ENCODE measurements at regions of chr2 and their contacts with region 1.

Region 1: DNA sequence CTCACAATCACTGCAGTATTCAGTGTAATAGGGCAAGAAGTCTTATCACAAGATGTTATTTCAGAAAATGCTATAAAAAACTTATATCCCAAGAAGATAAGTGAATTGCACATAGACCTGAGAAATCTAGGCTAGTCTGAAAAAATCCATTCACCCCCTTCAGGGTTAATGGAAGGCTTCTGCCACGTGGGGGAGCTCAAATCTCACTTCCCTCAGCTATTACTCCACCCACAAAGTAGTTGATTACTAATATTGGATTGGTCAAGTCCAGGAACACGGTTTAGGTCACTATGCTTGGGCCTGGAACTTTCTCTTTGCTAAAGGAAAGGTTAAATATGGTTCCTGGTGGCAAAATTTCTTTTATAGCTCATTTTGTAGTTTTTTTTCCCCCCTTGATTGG is 51.2 kb upstream of the ADAM23 start:
- DNase-seq: peak; percentile 81
- H3K4me3 ChIP-seq: no peak overlapping the region
- H3K27ac ChIP-seq: no peak overlapping the region
- H3K4me1 ChIP-seq: no peaks in the 10 kb centered on the region
- H3K27me3 ChIP-seq: no peaks in the 10 kb centered on the region
- CTCF ChIP-seq: peak; percentile 67 to 72
- POLR2A ChIP-seq: no peak

Region 2: DNA sequence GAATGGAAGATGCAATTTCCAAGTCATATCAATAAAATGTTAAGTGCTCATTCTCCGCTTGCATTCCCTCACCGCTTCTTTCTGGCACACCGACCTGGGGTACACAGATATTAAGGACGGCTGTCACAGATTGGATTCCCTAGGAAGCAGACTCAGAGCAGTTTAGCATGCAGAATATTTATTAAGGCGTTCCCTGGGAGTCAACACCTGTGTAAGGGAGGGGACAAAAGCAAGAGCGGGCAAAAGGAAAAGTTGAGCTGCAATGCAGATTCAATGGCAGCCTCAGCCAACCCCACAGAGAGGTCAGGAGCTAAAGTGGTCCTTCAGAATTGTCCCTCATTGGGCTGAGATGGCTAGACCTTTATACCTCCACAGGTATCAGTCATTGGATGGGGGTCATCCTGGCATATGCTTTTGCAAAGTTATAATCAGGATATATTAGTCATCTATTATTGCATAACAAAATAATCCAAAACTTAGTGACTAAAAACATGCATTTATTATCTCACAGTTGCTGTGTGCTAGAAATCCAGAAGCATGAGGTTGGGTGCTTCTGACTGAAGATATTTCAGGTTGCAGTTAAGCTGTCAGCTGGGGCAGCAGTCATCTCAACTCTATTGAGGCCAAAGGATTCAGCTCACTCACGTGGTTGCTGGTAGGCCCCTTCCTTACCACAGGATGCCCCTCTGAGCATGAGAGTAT is 279.1 kb before region 1 on chr2:
- CTCF ChIA-PET with region 1: no interaction called
- POLR2A ChIA-PET with region 1: no interaction called
- dilution Hi-C with region 1: no loop called
- intact Hi-C with region 1: no loop called
- DNase-seq: no peak
- H3K4me3 ChIP-seq: no peak overlapping the region
- H3K27ac ChIP-seq: no peak overlapping the region
- H3K4me1 ChIP-seq: no peaks in the 10 kb centered on the region
- H3K27me3 ChIP-seq: no peaks in the 10 kb centered on the region
- CTCF ChIP-seq: no peak
- POLR2A ChIP-seq: no peak

Region 3: DNA sequence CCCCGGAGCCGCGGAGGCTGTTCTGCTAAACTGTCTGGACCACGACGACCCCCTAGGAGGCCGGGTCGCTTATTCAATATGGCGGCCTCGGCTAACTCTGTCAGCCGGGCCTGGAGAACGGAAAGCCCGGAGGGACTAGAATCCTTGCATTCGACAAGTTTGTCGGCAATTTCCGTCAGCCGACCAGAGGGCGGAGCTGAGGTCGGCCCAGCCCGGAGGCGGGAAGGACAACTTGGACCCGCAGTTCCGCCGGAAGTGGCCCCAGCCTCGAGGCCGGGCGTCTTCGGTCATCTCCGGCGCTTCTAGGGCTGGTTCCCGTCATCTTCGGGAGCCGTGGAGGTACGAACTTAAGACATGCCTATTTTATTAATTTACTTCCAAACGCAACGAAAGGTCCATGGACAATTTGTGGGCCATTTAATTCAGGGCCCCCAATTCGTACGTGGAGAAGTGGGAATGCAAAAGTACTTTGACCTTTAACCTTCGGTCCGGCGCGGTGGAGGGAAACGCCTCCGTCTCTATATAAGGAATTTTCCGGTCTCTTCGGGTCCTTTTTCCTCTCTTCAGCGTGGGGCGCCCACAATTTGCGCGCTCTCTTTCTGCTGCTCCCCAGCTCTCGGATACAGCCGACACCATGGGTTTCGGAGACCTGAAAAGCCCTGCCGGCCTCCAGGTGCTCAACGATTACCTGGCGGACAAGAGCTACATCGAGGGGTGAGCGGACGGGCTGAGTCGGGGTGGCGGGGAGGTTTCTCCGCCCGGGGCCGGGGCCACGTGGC is 232.6 kb before region 1 on chr2 and contains the starts of genes EEF1B2 and NDUFS1:
- CTCF ChIA-PET with region 1: no interaction called
- POLR2A ChIA-PET with region 1: no interaction called
- dilution Hi-C with region 1: no loop called
- intact Hi-C with region 1: loop called (anchors 5 kb)
- DNase-seq: peak; percentile 99
- H3K4me3 ChIP-seq: peak within 1 kb of the TSS; percentile 72 to 97 (median 96)
- H3K27ac ChIP-seq: peak within 1 kb of the TSS; percentile 67
- H3K4me1 ChIP-seq: peaks cover 27% of the 10 kb centered on the region
- H3K27me3 ChIP-seq: no peaks in the 10 kb centered on the region
- CTCF ChIP-seq: no peak
- POLR2A ChIP-seq: peak; percentile 89
- total RNA-seq, gene EEF1B2: 558 and 576 TPM in 2 replicates
- total RNA-seq, gene NDUFS1: 93.2 and 95.5 TPM in 2 replicates

Region 4: DNA sequence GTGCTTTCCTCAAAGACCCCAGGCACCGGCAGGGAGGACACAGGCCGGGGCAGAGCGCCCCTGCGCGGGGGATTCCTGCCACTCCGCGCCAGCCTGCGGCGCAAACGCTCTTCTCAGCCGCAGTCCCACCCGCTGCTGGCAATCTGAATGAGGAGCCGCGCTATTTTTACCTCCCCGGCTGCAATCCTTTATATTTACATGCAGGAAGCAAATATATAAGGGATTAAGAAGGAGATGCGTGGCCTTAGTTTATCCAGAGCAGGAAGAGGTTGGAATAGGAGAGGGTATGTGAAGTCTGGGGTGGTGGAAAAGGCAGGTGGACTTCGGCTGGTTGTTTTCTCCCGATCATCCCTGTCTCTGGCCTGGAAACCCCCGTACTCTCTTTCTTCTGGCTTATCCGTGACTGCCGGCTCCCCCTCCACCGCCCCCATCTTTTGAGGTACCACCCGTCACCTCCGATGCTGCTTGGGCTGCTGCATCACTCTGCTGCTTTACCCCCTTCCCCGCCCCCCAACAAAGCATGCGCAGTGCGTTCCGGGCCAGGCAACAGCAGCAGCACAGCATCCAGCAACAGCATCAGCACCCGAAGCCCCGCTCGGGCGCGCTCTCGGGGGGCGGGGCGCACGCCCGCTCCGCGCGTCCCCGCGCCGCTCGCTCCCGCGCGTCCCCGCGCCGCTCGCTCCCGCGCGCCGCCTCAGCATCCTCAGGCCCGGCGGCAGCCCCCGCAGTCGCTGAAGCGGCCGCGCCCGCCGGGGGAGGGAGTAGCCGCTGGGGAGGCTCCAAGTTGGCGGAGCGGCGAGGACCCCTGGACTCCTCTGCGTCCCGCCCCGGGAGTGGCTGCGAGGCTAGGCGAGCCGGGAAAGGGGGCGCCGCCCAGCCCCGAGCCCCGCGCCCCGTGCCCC is 51.0 kb after region 1 on chr2 and contains the start of gene ADAM23:
- CTCF ChIA-PET with region 1: interaction called, 8 read pairs
- POLR2A ChIA-PET with region 1: no interaction called
- dilution Hi-C with region 1: no loop called
- intact Hi-C with region 1: loop called (anchors 1 kb)
- DNase-seq: peak; percentile 60
- H3K4me3 ChIP-seq: peak within 1 kb of the TSS; percentile 40 to 56 (median 55)
- H3K27ac ChIP-seq: no peak within 1 kb of the TSS
- H3K4me1 ChIP-seq: peaks cover 9% of the 10 kb centered on the region
- H3K27me3 ChIP-seq: peaks cover 2 to 8% of the 10 kb centered on the region in 2 experiments
- CTCF ChIP-seq: peak; percentile 30 to 63
- POLR2A ChIP-seq: peak; percentile 80
- total RNA-seq, gene ADAM23: 20.6 and 38.5 TPM in 2 replicates

Region 5: DNA sequence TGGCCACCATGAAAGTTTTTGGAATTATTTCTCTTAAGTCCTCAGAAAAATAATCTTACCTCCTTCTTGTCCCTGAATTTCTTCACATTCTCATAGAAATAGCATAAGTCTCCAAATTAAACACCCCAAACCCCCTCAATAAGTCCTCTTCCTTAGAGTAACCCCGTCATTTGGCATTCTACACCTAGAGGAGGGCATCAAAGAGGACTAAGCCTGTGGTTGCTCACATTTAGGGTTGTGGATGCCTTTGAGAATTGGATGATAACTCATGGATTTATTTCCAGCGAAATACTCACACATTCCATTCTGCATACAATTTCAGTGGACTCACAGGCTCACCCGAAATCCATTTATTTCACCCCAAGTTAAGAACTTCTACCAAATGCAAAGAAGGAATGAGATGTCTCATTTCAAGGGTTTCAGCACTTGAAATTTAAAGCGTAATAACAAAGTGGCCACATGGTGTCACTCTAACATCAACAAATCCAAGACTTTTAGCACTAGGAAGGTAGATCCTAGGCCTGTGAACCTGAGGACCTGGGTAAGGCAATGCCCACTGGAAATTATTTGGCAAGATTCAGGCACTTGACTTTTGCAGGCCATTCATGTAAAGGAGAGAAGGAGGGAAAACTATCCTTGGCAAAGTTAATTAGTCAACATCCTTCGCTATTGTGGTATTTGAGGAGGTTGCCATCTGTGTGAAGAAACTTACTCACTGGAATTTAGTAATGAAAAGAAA is 301.4 kb after region 1 on chr2:
- CTCF ChIA-PET with region 1: no interaction called
- POLR2A ChIA-PET with region 1: no interaction called
- dilution Hi-C with region 1: no loop called
- intact Hi-C with region 1: loop called (anchors 1 kb)
- DNase-seq: peak; percentile 71
- H3K4me3 ChIP-seq: no peak overlapping the region
- H3K27ac ChIP-seq: no peak overlapping the region
- H3K4me1 ChIP-seq: no peaks in the 10 kb centered on the region
- H3K27me3 ChIP-seq: no peaks in the 10 kb centered on the region
- CTCF ChIP-seq: peak; percentile 35 to 40
- POLR2A ChIP-seq: no peak

Region 6: GRCh38 chr2:206783718-206784117 is 391.6 kb after region 1 on chr2:
- CTCF ChIA-PET with region 1: interaction called, 9 read pairs
- POLR2A ChIA-PET with region 1: no interaction called
- dilution Hi-C with region 1: no loop called
- intact Hi-C with region 1: loop called (anchors 1 kb)
- DNase-seq: no peak
- H3K4me3 ChIP-seq: no peak overlapping the region
- H3K27ac ChIP-seq: no peak overlapping the region
- H3K4me1 ChIP-seq: peaks cover 3% of the 10 kb centered on the region
- H3K27me3 ChIP-seq: no peaks in the 10 kb centered on the region
- CTCF ChIP-seq: peak; percentile 40 to 71
- POLR2A ChIP-seq: no peak